HEK293 (cell line): ENCODE measurements at regions of chr5 and their contacts with region 1.

Region 1: DNA sequence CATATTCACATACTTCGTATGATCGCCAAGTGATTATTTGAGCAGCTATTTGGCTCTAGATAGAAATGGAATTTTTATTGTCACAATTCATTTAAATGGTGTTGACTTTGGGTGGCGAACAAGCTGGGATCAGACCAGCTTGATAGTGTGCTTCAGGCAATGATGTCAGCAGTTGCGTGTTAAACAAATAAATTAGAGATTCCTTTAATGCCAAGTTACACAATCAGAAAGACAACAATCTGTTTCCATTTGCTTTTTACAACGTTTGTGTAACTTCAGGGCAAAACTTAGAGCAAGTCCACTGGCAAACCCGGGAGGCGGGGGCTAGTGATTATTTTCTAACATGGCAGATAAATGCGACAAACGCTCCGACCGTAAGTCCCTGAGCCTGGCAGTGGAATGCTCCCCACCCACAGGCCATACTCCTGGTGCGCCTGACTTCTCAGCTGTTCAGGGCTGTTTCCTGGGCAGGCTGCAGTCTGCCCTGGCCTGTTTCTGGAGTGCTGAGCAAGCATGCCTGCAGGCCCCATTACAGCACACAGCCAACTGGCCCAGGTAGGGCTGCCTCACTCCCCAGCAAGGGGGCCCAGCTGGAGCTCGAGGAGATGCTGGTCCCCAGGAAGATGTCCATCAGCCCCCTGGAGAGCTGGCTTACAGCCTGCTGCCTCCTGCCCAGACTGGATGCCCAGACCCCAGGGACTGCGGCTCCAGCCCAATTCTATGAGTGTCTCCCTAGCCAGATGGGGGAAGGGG is 88.7 kb downstream of the BASP1 start:
- H3K4me3 ChIP-seq: no peak overlapping the region; the same call in 1 of the 2 replicates
- H3K27ac ChIP-seq: peak overlapping the region; percentile 85
- H3K4me1 ChIP-seq: peaks cover 32% of the 10 kb centered on the region
- CTCF ChIP-seq: peak; percentile 31; the same call in 1 of the 2 replicates

Region 2: GRCh38 chr5:17379100-17379951 is 73.2 kb after region 1 on chr5:
- CTCF ChIA-PET with region 1: interaction called, 3 read pairs
- POLR2A ChIA-PET with region 1: interaction called, 25 read pairs
- H3K4me3 ChIP-seq: no peak overlapping the region
- H3K27ac ChIP-seq: peak overlapping the region; percentile 70
- H3K4me1 ChIP-seq: peaks cover 40% of the 10 kb centered on the region
- CTCF ChIP-seq: no peak